ENCODE measurements at regions of chr12 and their contacts with region 1.

Region 1: DNA sequence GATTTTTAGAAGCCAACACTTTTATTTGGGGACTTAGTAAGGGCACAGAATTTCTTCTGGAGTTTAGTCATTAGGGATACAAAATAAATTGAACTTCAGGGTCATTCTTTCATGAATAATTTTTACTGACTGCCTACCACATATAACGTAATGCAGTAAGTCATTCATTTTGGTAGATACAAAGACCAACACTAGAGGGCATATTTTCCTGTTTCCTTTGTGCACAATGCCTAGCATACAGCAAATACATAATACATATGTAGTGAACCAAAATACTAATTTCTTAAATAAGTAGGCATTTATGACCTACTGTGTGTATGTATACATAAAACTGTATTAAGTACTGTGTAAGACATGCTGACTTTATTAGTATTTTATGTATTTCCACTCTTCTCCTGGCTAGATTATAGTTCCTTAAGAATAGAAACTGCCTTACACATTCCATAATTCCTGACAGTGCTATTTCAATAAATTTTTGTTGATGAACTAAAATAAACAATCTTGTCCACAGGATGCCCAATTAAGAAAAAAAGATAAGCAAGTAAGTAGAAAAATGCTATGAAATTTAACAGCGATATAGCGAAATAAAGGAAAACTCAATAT is 47.9 kb downstream of the PPP1R12A start:
- DNase-seq: peak; percentile 52
- H3K4me3 ChIP-seq: no peak overlapping the region
- H3K27ac ChIP-seq: no peak overlapping the region
- H3K4me1 ChIP-seq: no peaks in the 10 kb centered on the region
- CTCF ChIP-seq: peak; percentile 88

Region 2: DNA sequence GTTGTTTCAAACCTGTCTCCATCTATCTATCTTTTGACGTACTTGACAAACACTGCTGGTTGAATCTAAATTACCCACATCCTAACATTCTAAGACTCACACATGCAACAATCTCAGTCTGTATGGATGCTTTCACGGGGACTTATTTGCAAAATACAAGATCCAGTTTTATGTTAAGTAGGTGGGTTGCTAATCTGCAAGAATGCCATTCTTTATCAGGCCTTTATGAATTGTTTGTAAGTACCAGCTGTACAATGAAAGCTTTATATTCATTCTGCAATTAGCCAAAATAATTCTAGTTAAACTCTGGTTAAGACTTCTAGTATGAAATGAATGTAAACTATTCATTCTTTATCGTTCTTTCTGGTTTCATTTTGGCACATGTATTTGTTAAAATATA is 1921.2 kb before region 1 on chr12:
- CTCF ChIA-PET with region 1: no interaction called
- POLR2A ChIA-PET with region 1: no interaction called
- intact Hi-C with region 1: no loop called
- DNase-seq: no peak
- H3K4me3 ChIP-seq: no peak overlapping the region
- H3K27ac ChIP-seq: no peak overlapping the region
- H3K4me1 ChIP-seq: no peaks in the 10 kb centered on the region
- CTCF ChIP-seq: no peak

Region 3: DNA sequence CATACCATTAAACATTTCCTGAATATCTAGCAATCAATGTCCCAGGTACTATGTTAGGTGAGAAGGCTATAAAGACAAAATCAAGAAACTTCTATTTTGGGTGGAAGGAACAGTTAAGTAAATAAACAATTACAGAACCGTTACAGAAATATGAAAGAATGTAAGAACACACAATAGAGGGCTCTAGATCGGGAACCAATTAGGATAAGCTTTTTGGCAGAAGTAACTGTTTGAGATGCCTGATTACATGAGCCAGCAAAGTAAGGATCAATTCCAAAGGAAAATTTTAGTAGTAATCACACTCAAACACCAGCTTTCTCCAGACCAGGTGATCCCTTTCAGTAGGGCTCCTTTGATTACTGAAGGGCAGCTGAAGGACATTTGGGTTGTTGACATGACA is 13.9 kb after region 1 on chr12:
- CTCF ChIA-PET with region 1: interaction called, 7 read pairs
- POLR2A ChIA-PET with region 1: interaction called, 12 read pairs
- intact Hi-C with region 1: no loop called
- DNase-seq: no peak
- H3K4me3 ChIP-seq: no peak overlapping the region
- H3K27ac ChIP-seq: no peak overlapping the region
- H3K4me1 ChIP-seq: no peaks in the 10 kb centered on the region
- CTCF ChIP-seq: no peak

Region 4: GRCh38 chr12:79935021-79935623 is 48.1 kb after region 1 on chr12 and contains the start of gene PPP1R12A:
- CTCF ChIA-PET with region 1: no interaction called
- POLR2A ChIA-PET with region 1: no interaction called
- intact Hi-C with region 1: loop called (anchors 5 kb)
- DNase-seq: peak; percentile 96
- H3K4me3 ChIP-seq: peak within 1 kb of the TSS; percentile 100
- H3K27ac ChIP-seq: peak within 1 kb of the TSS; percentile 87
- H3K4me1 ChIP-seq: peaks cover 25% of the 10 kb centered on the region
- CTCF ChIP-seq: no peak
- total RNA-seq, gene PPP1R12A: 44.5 and 75.3 TPM in 2 replicates